ENCODE measurements at regions of chr19 and their contacts with region 1.

Region 1: GRCh38 chr19:8252922-8253589 is 43.9 kb downstream of the CERS4 start:
- DNase-seq: peak; percentile 86
- H3K4me3 ChIP-seq: no peak overlapping the region
- H3K27ac ChIP-seq: no peak overlapping the region
- H3K4me1 ChIP-seq: no peaks in the 10 kb centered on the region
- H3K27me3 ChIP-seq: no peaks in the 10 kb centered on the region
- CTCF ChIP-seq: peak; percentile 91 to 95 (median 94)
- EP300 ChIP-seq: no peak
- POLR2A ChIP-seq: no peak

Region 2: DNA sequence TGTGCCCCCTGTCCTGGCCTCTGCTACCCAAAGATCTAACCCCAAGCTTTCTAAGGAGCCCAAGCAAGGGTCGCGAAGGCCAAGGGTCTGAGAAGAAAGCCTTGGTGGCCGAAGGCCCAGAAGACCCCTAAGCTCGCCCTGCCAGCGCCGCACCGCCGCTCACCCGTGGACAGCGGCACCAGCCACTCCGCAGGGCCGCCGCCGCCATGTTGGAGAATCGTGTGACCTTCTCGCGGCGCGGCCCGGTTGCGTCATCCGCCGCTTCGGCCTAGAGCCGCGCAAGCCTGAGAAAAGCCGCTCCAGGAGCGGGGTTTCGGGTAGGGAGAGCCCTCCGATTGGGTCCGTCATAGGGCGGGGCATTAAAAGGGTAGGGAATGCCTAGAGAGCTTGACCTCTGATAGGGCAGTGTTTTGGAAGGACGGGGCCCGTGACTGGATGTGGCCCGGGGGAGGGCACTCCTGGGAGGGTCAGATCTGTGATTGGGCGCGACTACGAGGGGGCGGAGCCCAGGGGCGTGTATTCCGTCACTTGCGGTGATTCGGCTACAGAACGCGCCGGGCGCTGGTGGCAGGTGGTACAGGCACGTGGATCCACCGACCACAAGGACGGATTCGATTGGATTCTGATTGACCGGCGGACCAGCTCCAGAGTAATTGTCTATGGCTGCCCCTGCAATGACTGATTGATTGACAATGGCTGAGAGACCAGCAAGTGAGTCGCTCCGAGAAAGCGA is 309.4 kb before region 1 on chr19 and contains the start of gene TIMM44:
- in situ Hi-C with region 1: loop called in 2 of 4 experiments (anchors 10 kb)
- intact Hi-C with region 1: no loop called
- DNase-seq: peak; percentile 99
- H3K4me3 ChIP-seq: peak within 1 kb of the TSS; percentile 68 to 93 (median 80)
- H3K27ac ChIP-seq: peak within 1 kb of the TSS; percentile 90 to 98 (median 96)
- H3K4me1 ChIP-seq: peaks cover 5 to 26% (median 12%) of the 10 kb centered on the region in 4 donors
- H3K27me3 ChIP-seq: no peaks in the 10 kb centered on the region
- CTCF ChIP-seq: no peak
- EP300 ChIP-seq: no peak
- POLR2A ChIP-seq: peak; percentile 86
- total RNA-seq, gene TIMM44: 59.7 to 102 (median 71.8) TPM

Region 3: GRCh38 chr19:7953060-7953459 is 300.0 kb before region 1 on chr19:
- in situ Hi-C with region 1: loop called in 3 of 4 experiments (anchors 10 to 25 kb)
- intact Hi-C with region 1: loop called (anchors 10 kb)
- DNase-seq: no peak
- H3K4me3 ChIP-seq: no peak overlapping the region
- H3K27ac ChIP-seq: no peak overlapping the region
- H3K4me1 ChIP-seq: no peaks in the 10 kb centered on the region
- H3K27me3 ChIP-seq: no peaks in the 10 kb centered on the region
- CTCF ChIP-seq: no peak
- EP300 ChIP-seq: no peak
- POLR2A ChIP-seq: no peak

Region 4: GRCh38 chr19:8158411-8159074 is 94.5 kb before region 1 on chr19:
- in situ Hi-C with region 1: loop called in 2 of 4 experiments (anchors 5 kb)
- intact Hi-C with region 1: loop called (anchors 5 kb)
- DNase-seq: peak; percentile 23
- H3K4me3 ChIP-seq: no peak overlapping the region
- H3K27ac ChIP-seq: no peak overlapping the region
- H3K4me1 ChIP-seq: peaks cover 7 to 11% (median 9%) of the 10 kb centered on the region in 4 donors
- H3K27me3 ChIP-seq: no peaks in the 10 kb centered on the region
- CTCF ChIP-seq: peak; percentile 47 to 63 (median 52)
- EP300 ChIP-seq: no peak
- POLR2A ChIP-seq: no peak

Measured in transverse colon (tissue), 4 donors.